GM10248 (cell line): ENCODE measurements at regions of chr1 and their contacts with region 1.

Region 1: GRCh38 chr1:44759077-44759476 is 16.3 kb upstream of the RPS8 start:
- DNase-seq: no peak
- CTCF ChIP-seq: no peak

Region 2: GRCh38 chr1:44730741-44731512 is 28.1 kb before region 1 on chr1 and contains the start of gene RNU5D-1:
- CTCF ChIA-PET with region 1: interaction called, 29 read pairs
- POLR2A ChIA-PET with region 1: no interaction called
- DNase-seq: peak; percentile 87
- CTCF ChIP-seq: peak; percentile 81

Region 3: DNA sequence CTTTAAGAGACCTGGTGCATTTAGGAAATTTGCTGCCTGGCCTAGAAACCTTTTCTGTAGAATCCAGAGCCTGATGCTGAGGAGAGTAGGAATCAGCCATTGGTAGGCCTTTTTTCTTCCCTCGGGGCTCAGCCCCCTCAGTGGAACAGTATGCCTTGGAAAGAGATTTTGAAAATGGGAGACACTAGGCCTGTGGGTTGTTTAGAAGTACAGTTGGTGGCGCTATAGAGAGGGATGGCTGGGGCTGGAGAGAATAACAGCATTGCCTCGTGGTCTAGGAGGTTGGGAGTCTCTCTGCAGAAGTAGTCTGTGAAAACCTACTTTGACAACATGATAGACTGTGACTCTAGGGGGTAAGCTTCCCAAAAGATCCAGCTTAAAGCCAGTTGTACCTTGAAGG is 11.2 kb before region 1 on chr1:
- CTCF ChIA-PET with region 1: interaction called, 12 read pairs
- POLR2A ChIA-PET with region 1: no interaction called
- DNase-seq: no peak
- CTCF ChIP-seq: no peak